Right ventricle myocardium inferior (tissue), 1 donor: ENCODE measurements at regions of chr4 and their contacts with region 1.

Region 1: DNA sequence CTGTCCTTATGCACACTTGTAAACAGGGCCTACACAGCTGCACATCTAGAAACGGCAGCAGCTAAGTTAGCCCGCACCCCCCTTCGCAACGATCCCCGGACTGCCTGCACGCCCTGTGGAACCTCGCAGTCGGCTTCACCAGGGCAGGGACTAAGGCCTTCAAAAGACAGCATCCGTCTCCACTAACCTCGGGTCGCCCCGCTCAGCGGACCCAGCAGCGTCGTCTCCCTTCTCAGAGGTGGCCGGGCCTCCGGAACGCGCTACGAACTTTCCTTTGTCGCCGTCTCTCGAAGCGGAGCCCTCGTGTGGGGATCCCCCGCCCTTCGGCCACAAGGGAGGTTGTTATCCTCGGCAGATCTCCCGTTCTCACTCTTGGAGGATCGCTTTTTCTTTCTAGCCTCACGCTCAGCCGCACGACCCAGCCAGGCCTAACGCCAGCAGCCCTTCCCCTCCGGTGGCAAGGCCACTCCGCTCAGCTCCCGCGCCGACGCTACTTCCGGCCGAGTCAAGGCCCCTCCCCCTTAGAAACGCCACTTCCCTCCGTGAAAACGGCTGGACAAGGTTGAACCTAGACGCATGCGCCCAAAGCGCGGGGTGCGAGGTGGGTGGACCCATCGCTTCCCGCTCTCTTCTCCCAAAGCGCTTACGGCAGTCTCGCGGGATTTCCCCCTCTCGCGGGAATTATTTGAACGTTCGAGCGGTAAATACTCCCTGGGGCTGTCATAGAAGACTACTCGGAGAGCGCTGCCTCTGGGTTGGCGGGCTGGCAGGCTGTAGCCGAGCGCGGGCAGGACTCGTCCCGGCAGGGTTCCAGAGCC is at the starts of genes DCAF16 and NCAPG:
- DNase-seq: peak; percentile 99
- ATAC-seq: peak; percentile 100
- total RNA-seq, gene DCAF16: 13.3 TPM
- total RNA-seq, gene NCAPG: 1.2 TPM

Region 2: GRCh38 chr4:17544205-17544604 is 266.3 kb before region 1 on chr4:
- intact Hi-C with region 1: loop called (anchors 5 kb)
- DNase-seq: no peak
- ATAC-seq: no peak

Region 3: GRCh38 chr4:17576932-17577665 is 233.4 kb before region 1 on chr4 and contains the start of gene LAP3:
- intact Hi-C with region 1: loop called (anchors 1 kb)
- DNase-seq: peak; percentile 99
- ATAC-seq: peak; percentile 99
- total RNA-seq, gene LAP3: 56.9 TPM

Region 4: GRCh38 chr4:17614416-17615299 is 195.8 kb before region 1 on chr4 and contains the start of gene MED28:
- intact Hi-C with region 1: loop called (anchors 5 kb)
- DNase-seq: peak; percentile 98
- ATAC-seq: peak; percentile 96
- total RNA-seq, gene MED28: 22.0 TPM

Region 5: DNA sequence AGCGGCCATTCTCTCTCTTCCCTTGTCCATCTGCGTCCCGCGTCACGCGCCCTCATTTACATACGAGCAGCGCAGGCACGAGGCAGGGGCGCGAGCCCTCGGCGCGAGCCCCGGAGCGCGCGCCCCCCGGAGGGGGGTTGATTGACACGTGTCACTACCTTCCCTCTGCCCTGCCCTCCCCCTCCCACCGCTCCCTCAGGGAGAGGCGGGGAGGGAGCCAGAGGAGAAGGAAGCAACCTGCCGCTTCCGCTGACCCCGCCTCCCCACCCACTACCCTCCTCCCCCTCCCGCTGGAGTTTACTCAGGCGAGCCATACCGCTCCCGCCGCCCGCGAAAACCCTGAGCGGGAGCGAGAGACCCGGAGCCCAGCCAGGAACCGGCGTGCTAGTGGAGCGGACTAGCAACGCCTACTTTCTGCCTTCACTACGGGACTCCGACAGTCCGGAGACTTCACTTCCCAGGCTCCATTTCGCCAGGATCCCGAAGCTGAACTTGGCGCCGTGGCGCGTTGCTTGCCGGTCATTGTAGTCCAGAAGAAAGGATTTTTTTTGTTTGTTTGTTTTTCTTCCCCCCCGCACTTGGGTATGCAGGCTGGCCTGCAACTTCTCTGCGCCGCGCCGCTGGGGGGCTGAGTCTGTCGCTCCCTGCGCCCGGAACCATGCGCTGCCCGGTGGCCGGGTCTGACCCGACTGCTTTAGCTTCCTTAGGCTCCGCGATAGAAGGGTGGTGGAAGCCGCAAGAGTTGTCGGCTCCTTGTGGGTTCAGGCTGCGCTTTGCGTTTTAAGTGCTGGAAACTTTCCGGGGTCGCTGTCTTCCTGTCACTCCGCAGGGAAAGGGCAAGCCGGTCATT is 211.5 kb after region 1 on chr4 and contains the start of gene LCORL:
- intact Hi-C with region 1: loop called (anchors 1 kb)
- DNase-seq: peak; percentile 97
- ATAC-seq: peak; percentile 95
- total RNA-seq, gene LCORL: 8.7 TPM